Activated B cell treated with CpG ODN at 0.5 μM for 24 hours (primary cell): ENCODE measurements at regions of chr19 and their contacts with region 1.

Region 1: GRCh38 chr19:48608798-48609263 is 2.3 kb downstream of the SPACA4 start:
- DNase-seq: peak; percentile 52
- ATAC-seq: peak; percentile 98
- H3K4me3 Mint-ChIP-seq: peak overlapping the region; percentile 52
- H3K27ac Mint-ChIP-seq: peak overlapping the region; percentile 59
- H3K4me1 Mint-ChIP-seq: peaks cover 8% of the 10 kb centered on the region
- H3K27me3 Mint-ChIP-seq: no peaks in the 10 kb centered on the region
- CTCF ChIP-seq: no peak

Region 2: DNA sequence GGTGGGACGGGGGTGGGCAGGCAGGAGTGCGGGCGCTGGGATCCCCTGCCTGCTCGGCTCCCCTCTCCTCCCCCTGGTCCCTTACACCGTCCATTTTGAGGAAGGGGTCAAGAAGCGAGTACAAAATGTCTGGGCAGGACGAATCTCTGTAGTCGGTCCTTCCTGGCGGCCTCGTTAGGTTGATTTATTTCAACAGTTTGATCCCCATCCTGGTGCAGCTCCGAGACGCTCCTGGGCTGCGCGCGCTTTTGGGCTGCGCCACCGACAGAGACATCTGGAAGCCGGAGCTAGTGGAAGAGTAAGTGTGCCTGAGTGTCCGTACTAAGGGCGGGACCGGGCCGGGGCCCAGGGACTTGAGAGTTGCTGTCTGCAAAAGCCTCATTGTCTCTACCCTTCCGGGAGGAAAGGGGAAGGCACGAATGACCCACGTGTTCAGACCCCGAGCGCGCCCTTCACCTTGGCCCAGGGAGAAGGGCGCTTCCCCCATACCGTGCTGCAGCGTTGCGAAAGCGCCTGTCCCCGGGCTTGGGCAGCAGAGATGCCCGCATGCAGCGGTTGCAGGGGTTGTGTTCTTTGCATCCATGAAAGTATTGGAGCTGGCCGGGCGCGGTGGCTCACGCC is 337.2 kb before region 1 on chr19:
- CTCF ChIA-PET with region 1: interaction called, 8 read pairs
- POLR2A ChIA-PET with region 1: no interaction called
- intact Hi-C with region 1: loop called (anchors 1 kb)
- DNase-seq: peak; percentile 37
- ATAC-seq: peak; percentile 75
- H3K4me3 Mint-ChIP-seq: peak overlapping the region; percentile 95
- H3K27ac Mint-ChIP-seq: peak overlapping the region; percentile 80
- H3K4me1 Mint-ChIP-seq: peaks cover 14% of the 10 kb centered on the region
- H3K27me3 Mint-ChIP-seq: no peaks in the 10 kb centered on the region
- CTCF ChIP-seq: no peak

Region 3: GRCh38 chr19:48492925-48493717 is 115.7 kb before region 1 on chr19:
- CTCF ChIA-PET with region 1: interaction called, 27 read pairs
- POLR2A ChIA-PET with region 1: interaction called, 9 read pairs
- intact Hi-C with region 1: loop called (anchors 1 kb)
- DNase-seq: peak; percentile 71
- ATAC-seq: peak; percentile 69
- H3K4me3 Mint-ChIP-seq: peak overlapping the region; percentile 74
- H3K27ac Mint-ChIP-seq: no peak overlapping the region
- H3K4me1 Mint-ChIP-seq: peaks cover 42% of the 10 kb centered on the region
- H3K27me3 Mint-ChIP-seq: peaks cover 33% of the 10 kb centered on the region
- CTCF ChIP-seq: no peak

Region 4: DNA sequence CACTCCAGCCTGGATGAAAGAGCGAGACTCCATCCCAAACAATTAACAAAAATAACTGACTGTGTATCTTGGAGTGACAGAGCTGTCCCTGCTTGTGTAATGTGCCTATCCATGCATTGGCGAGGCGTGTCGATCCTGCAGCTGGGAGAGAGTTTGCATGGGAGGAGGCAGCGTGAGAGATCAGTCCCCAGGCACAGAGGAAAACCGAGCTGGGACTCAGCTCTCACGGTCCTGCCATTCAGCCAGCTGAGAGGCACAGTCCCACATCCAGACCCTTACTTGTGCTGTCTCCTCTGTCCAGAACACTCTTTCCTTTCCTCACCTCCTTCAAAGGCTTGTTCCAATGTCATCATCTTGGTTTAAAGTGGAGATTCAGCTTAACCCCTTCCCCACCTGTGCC is 68.7 kb before region 1 on chr19:
- CTCF ChIA-PET with region 1: no interaction called
- POLR2A ChIA-PET with region 1: no interaction called
- intact Hi-C with region 1: no loop called
- DNase-seq: no peak
- ATAC-seq: no peak
- H3K4me3 Mint-ChIP-seq: no peak overlapping the region
- H3K27ac Mint-ChIP-seq: no peak overlapping the region
- H3K4me1 Mint-ChIP-seq: no peaks in the 10 kb centered on the region
- H3K27me3 Mint-ChIP-seq: no peaks in the 10 kb centered on the region
- CTCF ChIP-seq: no peak

Region 5: DNA sequence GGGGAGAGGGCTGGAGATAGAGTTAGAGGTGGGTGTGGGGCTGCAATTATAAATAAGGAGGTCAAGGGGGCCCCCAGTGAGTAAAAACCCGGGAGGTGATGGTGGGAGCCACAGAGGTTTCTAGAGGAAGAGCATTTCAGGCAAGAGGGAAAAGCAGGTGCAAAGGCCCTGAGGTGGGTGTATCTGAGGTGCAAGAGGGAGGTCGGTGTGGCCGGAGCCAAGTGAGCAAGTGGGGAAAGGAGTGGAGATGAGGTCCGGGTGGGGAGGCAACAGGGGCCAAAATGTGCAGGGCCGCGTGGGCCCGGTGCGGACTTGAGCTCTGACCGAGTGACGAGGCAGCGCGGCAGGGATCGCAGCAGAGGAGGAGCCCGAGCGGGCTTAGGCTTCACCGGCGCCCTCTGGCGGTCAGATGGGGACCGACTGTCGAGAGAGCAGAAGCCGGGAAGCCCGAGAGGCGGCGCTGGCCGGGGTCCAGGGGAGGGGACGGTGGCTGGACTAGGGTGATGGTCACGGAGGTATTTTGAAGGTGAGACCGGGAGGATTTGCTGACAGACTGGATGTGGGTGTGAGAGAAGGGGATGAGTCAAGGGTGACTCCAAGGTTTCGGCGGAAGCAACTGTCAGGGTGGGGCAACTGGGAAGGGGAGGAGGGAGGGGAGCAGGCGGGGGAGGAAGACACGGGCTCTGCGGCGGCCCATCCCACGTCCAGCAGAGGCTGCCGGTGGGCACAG is 20.0 kb before region 1 on chr19:
- CTCF ChIA-PET with region 1: interaction called, 20 read pairs
- POLR2A ChIA-PET with region 1: no interaction called
- intact Hi-C with region 1: loop called (anchors 1 kb)
- DNase-seq: peak; percentile 84
- ATAC-seq: peak; percentile 93
- H3K4me3 Mint-ChIP-seq: peak overlapping the region; percentile 80
- H3K27ac Mint-ChIP-seq: no peak overlapping the region
- H3K4me1 Mint-ChIP-seq: peaks cover 15% of the 10 kb centered on the region
- H3K27me3 Mint-ChIP-seq: peaks cover 9% of the 10 kb centered on the region
- CTCF ChIP-seq: peak; percentile 58

Region 6: DNA sequence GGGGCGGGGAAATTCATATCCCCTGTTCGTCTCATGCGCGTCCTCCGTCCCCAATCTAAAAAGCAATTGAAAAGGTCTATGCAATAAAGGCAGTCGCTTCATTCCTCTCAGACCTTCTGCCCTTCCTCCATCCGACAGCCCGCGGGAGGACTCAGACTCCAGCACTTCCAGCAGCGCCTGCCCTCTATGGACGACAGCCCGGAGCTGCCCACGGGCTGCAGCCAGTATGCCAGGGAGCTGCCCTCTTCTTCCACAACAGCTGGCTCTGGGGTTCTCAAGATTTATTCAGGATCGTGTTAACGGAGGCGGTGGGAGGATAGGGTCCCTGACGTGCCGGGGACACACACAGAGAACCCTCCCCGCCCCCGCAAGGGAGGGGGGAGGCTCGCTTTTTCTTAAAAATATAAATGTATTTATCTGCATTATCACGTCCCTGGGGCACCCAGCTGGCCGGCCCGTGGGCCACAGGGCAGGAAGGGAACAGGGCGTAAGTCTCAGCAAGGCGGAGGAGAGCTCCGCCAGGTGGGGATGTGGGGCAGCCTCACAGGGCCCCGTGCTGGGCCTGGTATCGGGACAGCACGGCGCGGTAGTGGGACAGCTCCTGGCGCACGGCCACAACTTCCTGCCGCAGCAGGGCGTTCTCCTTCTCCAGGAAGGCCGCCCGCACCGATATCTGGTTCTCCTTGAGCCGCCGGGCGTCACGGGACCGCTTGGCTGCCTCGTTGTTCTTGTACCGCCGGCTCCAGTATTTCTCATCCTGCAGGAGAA is 21.6 kb after region 1 on chr19:
- CTCF ChIA-PET with region 1: interaction called, 3 read pairs
- POLR2A ChIA-PET with region 1: interaction called, 16 read pairs
- intact Hi-C with region 1: no loop called
- DNase-seq: no peak
- ATAC-seq: no peak
- H3K4me3 Mint-ChIP-seq: no peak overlapping the region
- H3K27ac Mint-ChIP-seq: no peak overlapping the region
- H3K4me1 Mint-ChIP-seq: peaks cover 36% of the 10 kb centered on the region
- H3K27me3 Mint-ChIP-seq: no peaks in the 10 kb centered on the region
- CTCF ChIP-seq: no peak

Region 7: GRCh38 chr19:48881741-48882657 is 273.2 kb after region 1 on chr19:
- CTCF ChIA-PET with region 1: no interaction called
- POLR2A ChIA-PET with region 1: no interaction called
- intact Hi-C with region 1: no loop called
- DNase-seq: no peak
- ATAC-seq: peak; percentile 71
- H3K4me3 Mint-ChIP-seq: no peak overlapping the region
- H3K27ac Mint-ChIP-seq: peak overlapping the region; percentile 41
- H3K4me1 Mint-ChIP-seq: peaks cover 19% of the 10 kb centered on the region
- H3K27me3 Mint-ChIP-seq: no peaks in the 10 kb centered on the region
- CTCF ChIP-seq: no peak